ENCODE measurements at regions of chr2 and their contacts with region 1.

Region 1: DNA sequence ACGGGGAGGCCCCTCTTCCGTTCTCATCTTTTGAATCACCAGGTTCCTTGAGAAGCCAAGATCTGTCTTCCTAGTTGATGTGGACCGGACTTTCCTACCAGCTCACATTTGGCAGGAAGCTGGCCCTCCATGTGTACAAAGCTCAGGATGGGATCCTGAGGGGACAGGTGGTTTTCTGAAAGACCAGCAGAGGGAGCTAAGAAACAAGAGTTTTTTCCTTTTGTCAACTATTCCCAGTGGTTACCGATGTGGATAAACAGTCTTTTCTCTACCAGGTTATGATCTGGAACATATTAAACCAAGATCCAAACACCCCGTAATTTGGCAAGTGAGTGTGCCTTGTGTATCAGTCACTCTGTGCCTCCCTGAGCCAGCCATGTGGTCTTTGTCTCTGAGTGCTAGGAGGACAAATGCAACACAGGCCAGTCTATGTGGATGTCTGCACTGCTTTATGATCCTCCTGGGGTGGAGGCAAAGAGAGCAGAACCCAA is 25.1 kb upstream of the ARHGAP25 start:
- DNase-seq: no peak
- ATAC-seq: no peak

Region 2: GRCh38 chr2:68909793-68910674 is 200.6 kb after region 1 on chr2:
- intact Hi-C with region 1: loop called (anchors 5 kb)
- DNase-seq: no peak
- ATAC-seq: no peak

Region 3: GRCh38 chr2:68925295-68925896 is 215.9 kb after region 1 on chr2:
- intact Hi-C with region 1: loop called (anchors 2 kb)
- DNase-seq: no peak
- ATAC-seq: peak; percentile 62

Region 4: DNA sequence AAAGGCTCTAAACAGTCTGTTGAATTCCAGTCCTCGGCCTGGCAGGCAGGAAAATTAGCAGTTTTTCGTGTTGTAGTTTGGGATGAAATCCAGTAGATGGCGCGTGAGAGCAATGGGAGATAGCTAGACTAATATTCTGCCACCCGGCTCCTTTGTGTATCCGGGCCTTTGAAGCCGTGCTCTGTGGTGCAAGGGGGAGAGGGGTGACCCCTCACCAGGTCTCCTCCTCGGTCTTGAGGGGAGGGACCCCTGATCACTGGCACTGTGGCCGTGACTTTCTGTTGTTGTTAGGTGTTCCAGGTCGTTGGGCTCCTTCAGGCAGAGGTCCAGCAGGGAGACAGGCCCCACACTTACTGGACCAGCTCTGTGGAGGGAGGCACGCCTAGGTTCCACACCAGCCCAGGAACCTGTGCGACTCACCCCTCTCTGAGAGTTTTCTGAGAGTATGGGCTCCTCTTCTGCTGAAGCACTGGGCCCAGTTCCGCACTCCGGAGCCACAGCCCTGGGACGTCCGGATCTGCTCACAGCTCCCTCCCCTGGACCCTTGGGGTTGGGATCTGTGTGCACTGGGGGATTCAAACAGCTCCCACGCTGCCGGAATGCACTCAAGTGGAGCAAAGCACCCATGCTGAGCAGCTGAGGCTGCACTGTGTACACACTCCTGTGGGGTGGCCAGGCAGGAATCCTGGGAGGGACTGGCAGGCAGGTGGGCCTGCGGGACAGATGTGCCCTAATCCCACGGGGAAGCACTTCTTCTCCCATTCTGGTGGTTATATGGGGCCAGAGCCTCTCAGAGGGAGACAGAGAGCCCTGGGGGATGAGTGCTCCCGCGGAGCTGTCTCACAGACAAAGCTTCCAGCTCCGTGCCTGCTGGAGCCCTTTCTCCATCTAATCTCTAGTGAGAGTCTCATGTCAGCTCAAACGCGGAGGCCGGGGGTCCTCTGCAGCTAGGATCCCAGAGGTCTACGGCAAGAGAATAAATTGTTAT is 234.4 kb after region 1 on chr2:
- intact Hi-C with region 1: no loop called
- DNase-seq: no peak
- ATAC-seq: peak; percentile 63

Measured in Right ventricle myocardium inferior (tissue), 1 donor.